Activated CD4-positive, alpha-beta T cell treated with anti-CD3 and anti-CD28 coated beads for 36 hours (primary cell): ENCODE measurements at regions of chr2 and their contacts with region 1.

Region 1: GRCh38 chr2:203327901-203328759 is at the start of gene ABI2:
- DNase-seq: peak; percentile 77
- ATAC-seq: peak; percentile 52
- H3K4me3 Mint-ChIP-seq: peak within 1 kb of the TSS; percentile 91
- H3K27ac Mint-ChIP-seq: peak within 1 kb of the TSS; percentile 84
- H3K4me1 Mint-ChIP-seq: peaks cover 31% of the 10 kb centered on the region
- H3K27me3 Mint-ChIP-seq: no peaks in the 10 kb centered on the region
- total RNA-seq, gene ABI2: 40.6 to 57.6 TPM

Region 2: DNA sequence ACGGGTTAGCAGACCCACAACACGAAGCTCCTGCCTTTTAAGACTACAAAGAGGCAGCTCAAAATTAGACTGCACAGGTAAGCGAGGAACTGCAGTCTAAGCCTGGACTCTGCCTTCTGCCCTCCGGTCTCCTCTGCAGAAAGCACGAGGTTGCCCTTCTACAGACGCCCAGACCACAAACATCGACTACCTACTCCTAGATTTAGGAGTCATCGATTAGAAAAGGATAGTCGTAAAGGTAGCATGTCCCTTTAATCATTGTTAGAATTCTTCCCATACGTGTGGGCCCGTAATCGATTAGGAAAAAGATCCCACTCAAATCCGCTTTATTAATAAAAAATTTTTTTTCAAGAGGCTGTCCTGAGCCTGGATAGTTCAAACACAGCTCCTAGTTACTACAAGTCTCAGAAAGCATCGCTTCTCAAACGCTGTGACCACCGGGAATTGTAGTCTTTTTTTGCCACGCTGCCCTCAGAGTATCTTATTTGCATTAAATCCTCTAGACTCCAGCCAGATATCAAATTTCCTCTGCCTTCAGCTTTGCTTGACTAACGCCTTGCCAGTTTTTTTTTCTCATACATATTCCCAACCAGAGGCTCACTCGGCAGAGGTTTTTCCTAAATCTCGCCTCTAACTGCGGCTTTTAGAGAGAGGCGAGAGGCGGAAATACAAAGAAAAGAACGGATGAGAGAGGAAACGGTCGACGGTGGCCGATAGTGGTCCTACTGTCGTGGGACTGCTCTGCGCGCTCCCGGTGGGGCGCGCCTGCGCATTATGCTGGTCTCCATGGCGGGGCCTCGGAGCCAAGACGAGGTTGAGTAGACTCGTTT is 416.4 kb before region 1 on chr2 and contains the starts of genes CARF and WDR12:
- CTCF ChIA-PET with region 1: no interaction called
- POLR2A ChIA-PET with region 1: interaction called, 7 read pairs
- intact Hi-C with region 1: loop called in 1 of 2 experiments (anchors 1 kb)
- DNase-seq: peak; percentile 96
- ATAC-seq: peak; percentile 84
- H3K4me3 Mint-ChIP-seq: peak within 1 kb of the TSS; percentile 84
- H3K27ac Mint-ChIP-seq: peak within 1 kb of the TSS; percentile 95
- H3K4me1 Mint-ChIP-seq: peaks cover 30% of the 10 kb centered on the region
- H3K27me3 Mint-ChIP-seq: no peaks in the 10 kb centered on the region
- total RNA-seq, gene CARF: 6.2 to 9.0 TPM
- total RNA-seq, gene WDR12: 92.5 to 129 TPM

Region 3: DNA sequence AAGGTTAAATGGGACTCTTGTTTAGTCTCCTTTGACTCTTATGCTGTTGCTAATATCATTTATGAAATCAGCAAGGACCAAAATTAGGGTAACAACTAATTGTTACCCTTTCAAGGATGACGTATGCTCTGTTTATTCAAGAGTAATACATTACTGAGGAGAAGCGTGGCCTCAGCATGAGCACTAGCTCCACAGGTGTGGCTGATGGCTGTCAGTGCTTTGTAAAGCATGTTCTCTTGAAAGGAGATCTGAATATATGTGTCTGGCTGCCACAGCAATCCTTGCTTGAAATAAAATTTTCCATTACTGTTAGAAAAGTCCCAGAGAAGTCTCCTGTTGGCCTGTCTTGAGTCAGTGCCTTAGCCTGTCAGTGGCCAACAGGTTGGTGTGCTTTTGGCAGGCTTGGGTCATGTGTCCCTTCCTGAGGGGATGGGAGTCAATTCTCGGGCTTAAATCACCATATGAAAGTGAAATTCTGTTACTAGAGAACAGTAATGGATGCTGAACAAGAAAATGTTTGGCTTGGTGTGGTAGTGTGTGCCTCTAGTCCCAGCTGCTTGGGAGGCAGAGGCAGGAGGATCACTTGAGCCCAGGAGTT is 32.8 kb after region 1 on chr2:
- CTCF ChIA-PET with region 1: no interaction called
- POLR2A ChIA-PET with region 1: no interaction called
- intact Hi-C with region 1: no loop called
- DNase-seq: no peak
- ATAC-seq: no peak
- H3K4me3 Mint-ChIP-seq: no peak overlapping the region
- H3K27ac Mint-ChIP-seq: no peak overlapping the region
- H3K4me1 Mint-ChIP-seq: peaks cover 2% of the 10 kb centered on the region
- H3K27me3 Mint-ChIP-seq: no peaks in the 10 kb centered on the region